ENCODE measurements at regions of chr7 and their contacts with region 1.

Region 1: DNA sequence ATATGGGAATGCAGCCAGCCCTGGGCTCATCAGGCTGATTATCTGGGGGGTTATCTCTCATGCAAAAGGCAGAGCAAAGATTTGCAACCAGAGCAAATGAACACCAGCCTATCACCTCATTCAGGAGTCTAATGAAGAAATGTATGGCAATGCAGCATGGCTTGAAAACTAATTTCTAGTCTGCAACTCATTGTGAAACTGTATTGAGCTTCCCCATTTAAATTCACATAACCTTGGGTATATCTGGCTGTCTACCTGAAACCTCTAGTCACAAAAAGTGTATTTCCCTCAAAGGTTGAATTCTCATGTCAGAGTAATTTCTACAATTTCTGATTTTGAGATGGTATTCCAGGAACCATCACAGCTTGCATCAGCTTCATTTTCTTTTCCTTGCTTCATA is 240.0 kb downstream of the SDHAF3 start:
- DNase-seq: no peak
- H3K4me3 ChIP-seq: no peak overlapping the region
- CTCF ChIP-seq: no peak

Region 2: GRCh38 chr7:96833676-96834453 is 523.6 kb before region 1 on chr7:
- in situ Hi-C with region 1: no loop called
- DNase-seq: no peak
- H3K4me3 ChIP-seq: no peak overlapping the region
- CTCF ChIP-seq: no peak

Region 3: GRCh38 chr7:97226541-97226940 is 130.9 kb before region 1 on chr7:
- in situ Hi-C with region 1: no loop called
- DNase-seq: no peak
- H3K4me3 ChIP-seq: no peak overlapping the region
- CTCF ChIP-seq: no peak

Region 4: DNA sequence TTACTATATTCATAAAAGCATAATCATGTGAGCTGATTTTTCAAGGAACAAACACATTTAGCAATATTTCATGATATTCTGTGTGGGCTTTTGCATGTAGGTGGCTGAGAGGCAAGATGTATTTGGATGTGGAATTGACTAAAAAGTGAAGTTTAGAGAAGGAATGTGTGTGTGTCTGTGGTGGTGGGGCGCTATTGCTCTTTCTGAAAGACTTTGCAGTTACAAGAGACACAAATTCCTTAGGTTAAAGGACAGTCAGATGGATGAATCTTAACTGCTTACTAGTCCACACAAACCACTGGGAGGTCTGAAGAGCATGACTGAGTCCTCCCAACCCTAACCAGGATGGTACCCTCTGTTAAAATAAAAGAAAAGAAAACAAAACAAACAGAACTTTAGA is 39.9 kb before region 1 on chr7:
- in situ Hi-C with region 1: loop called (anchors 5 kb)
- DNase-seq: no peak
- H3K4me3 ChIP-seq: no peak overlapping the region
- CTCF ChIP-seq: no peak

Region 5: DNA sequence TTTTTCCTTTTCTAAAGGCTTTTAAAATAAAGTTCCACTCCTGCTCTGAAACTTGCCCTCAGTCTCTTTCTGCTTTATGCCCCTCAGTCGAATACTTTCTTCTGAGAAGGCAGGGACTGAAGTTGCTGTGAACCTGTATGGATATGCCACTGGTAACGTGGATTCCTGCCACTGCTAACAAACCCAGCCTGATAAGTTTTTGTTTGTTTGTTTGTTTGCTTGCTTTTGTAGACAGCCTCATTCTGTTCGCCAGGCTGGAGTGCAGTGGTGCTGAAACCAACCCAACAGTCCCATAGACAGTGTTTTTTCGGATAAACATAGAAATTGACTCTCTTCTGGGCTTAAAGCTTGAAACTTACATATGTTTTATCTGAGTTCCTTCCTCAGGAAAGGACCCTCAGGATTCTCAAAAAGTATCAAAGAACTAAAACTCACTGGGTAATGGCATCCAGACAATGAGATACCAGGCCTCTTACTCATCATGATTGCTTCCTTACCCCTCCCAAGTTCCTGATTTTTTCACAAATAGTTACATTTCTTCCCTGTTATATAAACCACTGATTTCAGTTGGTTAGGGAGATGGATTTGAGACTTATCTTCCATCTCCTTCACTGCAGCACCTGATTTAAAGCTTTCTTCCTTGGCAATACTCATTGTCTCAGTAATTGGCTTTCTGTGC is 33.6 kb after region 1 on chr7:
- in situ Hi-C with region 1: no loop called
- DNase-seq: no peak
- H3K4me3 ChIP-seq: no peak overlapping the region
- CTCF ChIP-seq: no peak

Region 6: GRCh38 chr7:97401398-97401797 is 43.9 kb after region 1 on chr7:
- in situ Hi-C with region 1: no loop called
- DNase-seq: no peak
- H3K4me3 ChIP-seq: no peak overlapping the region
- CTCF ChIP-seq: no peak